Activated CD4-positive, alpha-beta memory T cell treated with anti-CD3 and anti-CD28 coated beads for 36 hours (primary cell): ENCODE measurements at regions of chr2 and their contacts with region 1.

Region 1: DNA sequence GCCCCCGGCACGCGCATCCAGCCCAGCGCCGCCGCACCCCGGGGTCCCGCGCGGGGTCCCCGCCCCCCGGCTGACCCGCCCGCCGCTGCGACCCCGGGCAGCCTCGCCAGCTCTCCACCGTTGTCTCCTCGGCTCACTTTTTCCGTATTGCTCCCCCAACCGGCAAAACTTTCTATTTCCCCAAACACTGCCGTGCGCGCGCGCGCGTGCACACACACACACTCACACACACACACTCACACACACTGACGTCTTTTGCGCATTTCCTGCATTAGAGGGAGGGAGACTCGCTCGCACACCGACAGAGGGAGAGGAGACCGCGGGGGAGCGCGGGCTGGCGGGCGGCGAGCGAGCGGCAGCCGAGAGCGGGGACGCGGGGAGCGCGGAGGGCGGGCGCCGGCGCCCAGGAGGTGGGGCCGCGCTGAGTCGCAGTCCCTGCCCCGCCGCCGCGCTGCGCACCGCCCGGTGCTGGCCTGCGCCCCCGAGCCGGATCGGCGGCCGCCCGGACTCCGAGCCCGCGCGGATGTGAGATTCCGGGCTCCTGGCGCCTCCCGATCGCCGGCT is 542 bp upstream of the PRKCE start:
- DNase-seq: peak; percentile 94
- H3K4me3 Mint-ChIP-seq: peak overlapping the region; percentile 87
- H3K27ac Mint-ChIP-seq: peak overlapping the region; percentile 92
- H3K4me1 Mint-ChIP-seq: peaks cover 25% of the 10 kb centered on the region
- H3K27me3 Mint-ChIP-seq: peaks cover 2% of the 10 kb centered on the region

Region 2: GRCh38 chr2:45611020-45611737 is 39.8 kb before region 1 on chr2 and contains the start of gene SRBD1:
- CTCF ChIA-PET with region 1: no interaction called
- POLR2A ChIA-PET with region 1: interaction called, 3 read pairs
- intact Hi-C with region 1: loop called (anchors 2 kb)
- DNase-seq: peak; percentile 96
- H3K4me3 Mint-ChIP-seq: peak within 1 kb of the TSS; percentile 95
- H3K27ac Mint-ChIP-seq: peak within 1 kb of the TSS; percentile 94
- H3K4me1 Mint-ChIP-seq: peaks cover 18% of the 10 kb centered on the region
- H3K27me3 Mint-ChIP-seq: no peaks in the 10 kb centered on the region
- total RNA-seq, gene SRBD1: 19.3 to 20.5 TPM

Region 3: GRCh38 chr2:45699032-45699658 is 48.2 kb after region 1 on chr2:
- CTCF ChIA-PET with region 1: no interaction called
- POLR2A ChIA-PET with region 1: interaction called, 3 read pairs
- intact Hi-C with region 1: loop called (anchors 5 kb)
- DNase-seq: peak; percentile 25
- H3K4me3 Mint-ChIP-seq: no peak overlapping the region
- H3K27ac Mint-ChIP-seq: peak overlapping the region; percentile 31
- H3K4me1 Mint-ChIP-seq: peaks cover 15% of the 10 kb centered on the region
- H3K27me3 Mint-ChIP-seq: no peaks in the 10 kb centered on the region

Region 4: DNA sequence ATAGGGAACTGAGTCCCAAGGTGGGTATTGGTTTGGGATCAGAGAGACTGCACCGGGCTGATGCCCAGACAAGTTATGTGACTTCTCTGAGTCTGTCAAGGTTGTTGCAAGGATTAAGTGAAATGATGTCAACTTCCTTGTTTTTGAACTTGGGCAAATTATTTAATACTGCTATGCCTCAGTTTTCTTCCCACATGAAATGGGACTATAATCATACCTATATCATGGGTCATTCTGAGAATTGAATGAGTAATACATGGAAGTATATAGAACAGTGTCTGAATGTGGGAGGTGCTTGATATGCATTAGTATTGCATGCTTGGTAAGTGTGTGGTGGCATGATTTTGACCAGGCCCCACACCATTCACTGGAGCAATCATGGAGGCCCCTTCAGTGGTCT is 99.6 kb after region 1 on chr2:
- CTCF ChIA-PET with region 1: no interaction called
- POLR2A ChIA-PET with region 1: interaction called, 3 read pairs
- intact Hi-C with region 1: loop called (anchors 1 kb)
- DNase-seq: peak; percentile 30
- H3K4me3 Mint-ChIP-seq: no peak overlapping the region
- H3K27ac Mint-ChIP-seq: peak overlapping the region; percentile 25
- H3K4me1 Mint-ChIP-seq: peaks cover 22% of the 10 kb centered on the region
- H3K27me3 Mint-ChIP-seq: no peaks in the 10 kb centered on the region

Region 5: GRCh38 chr2:45778720-45779171 is 127.8 kb after region 1 on chr2:
- CTCF ChIA-PET with region 1: interaction called, 34 read pairs
- POLR2A ChIA-PET with region 1: interaction called, 3 read pairs
- intact Hi-C with region 1: loop called (anchors 1 kb)
- DNase-seq: peak; percentile 68
- H3K4me3 Mint-ChIP-seq: no peak overlapping the region
- H3K27ac Mint-ChIP-seq: peak overlapping the region; percentile 30
- H3K4me1 Mint-ChIP-seq: peaks cover 5% of the 10 kb centered on the region
- H3K27me3 Mint-ChIP-seq: no peaks in the 10 kb centered on the region

Region 6: GRCh38 chr2:45935791-45936622 is 285.1 kb after region 1 on chr2:
- CTCF ChIA-PET with region 1: interaction called, 11 read pairs
- POLR2A ChIA-PET with region 1: no interaction called
- intact Hi-C with region 1: no loop called
- DNase-seq: peak; percentile 77
- H3K4me3 Mint-ChIP-seq: no peak overlapping the region
- H3K27ac Mint-ChIP-seq: no peak overlapping the region
- H3K4me1 Mint-ChIP-seq: peaks cover 9% of the 10 kb centered on the region
- H3K27me3 Mint-ChIP-seq: no peaks in the 10 kb centered on the region